ENCODE measurements at regions of chr11 and their contacts with region 1.

Region 1: GRCh38 chr11:83836883-83837654 is 550.9 kb upstream of the CCDC90B start:
- DNase-seq: peak; percentile 41
- H3K4me3 ChIP-seq: no peak overlapping the region
- H3K27ac ChIP-seq: no peak overlapping the region
- H3K4me1 ChIP-seq: no peaks in the 10 kb centered on the region
- CTCF ChIP-seq: peak; percentile 77

Region 2: GRCh38 chr11:84524422-84525051 is 687.5 kb after region 1 on chr11:
- CTCF ChIA-PET with region 1: no interaction called
- POLR2A ChIA-PET with region 1: interaction called, 4 read pairs
- intact Hi-C with region 1: loop called (anchors 10 kb)
- DNase-seq: peak; percentile 27
- H3K4me3 ChIP-seq: no peak overlapping the region
- H3K27ac ChIP-seq: no peak overlapping the region
- H3K4me1 ChIP-seq: no peaks in the 10 kb centered on the region
- CTCF ChIP-seq: peak; percentile 74

Measured in OCI-LY7 (cell line).